ENCODE measurements at regions of chr16 and their contacts with region 1.

Region 1: DNA sequence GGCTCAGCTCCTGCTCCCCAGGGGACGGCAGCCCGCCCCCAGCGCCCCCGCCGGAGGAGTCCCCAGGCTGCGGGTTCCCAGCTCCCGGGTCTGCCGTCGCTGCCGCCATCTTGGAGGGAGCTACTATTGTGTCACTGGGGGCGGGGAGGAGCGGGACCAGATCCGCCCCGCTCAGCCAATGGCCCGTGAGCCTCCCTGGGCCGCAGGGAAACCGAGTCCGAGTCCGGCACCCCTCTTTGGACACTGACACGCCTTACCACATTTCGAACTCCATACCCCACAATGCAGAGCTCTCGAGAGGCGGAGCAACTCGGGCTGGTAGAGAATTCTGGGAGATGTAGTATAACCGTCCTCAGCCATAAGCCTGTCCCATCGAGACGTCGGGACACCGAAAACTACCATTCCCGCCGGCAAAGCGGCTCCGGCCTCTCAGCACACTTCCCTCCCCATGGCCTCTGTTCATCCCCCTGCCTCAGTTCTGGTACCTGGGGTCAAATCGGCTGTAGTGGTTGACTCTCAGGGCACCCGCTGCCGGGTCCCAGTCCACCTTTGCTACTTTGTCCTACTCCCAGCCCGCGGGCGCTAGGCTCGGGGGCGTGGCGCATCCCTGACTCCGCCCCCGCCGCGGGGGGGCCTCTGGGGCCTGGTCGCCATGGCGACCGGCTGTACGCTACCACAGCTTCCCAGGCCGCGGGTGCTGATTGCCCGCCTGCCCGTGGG is at the starts of genes RANBP10 and TSNAXIP1:
- DNase-seq: peak; percentile 100
- H3K4me3 ChIP-seq: peak within 1 kb of the TSS; percentile 93
- H3K27ac ChIP-seq: peak within 1 kb of the TSS; percentile 35
- H3K4me1 ChIP-seq: peaks cover 7% of the 10 kb centered on the region
- H3K27me3 ChIP-seq: no peaks in the 10 kb centered on the region
- total RNA-seq, gene RANBP10: 2.4 and 3.3 TPM in 2 replicates
- total RNA-seq, gene TSNAXIP1: 0.65 and 2.4 TPM in 2 replicates

Region 2: GRCh38 chr16:67672739-67673662 is 133.6 kb before region 1 on chr16:
- in situ Hi-C with region 1: loop called (anchors 10 kb)
- DNase-seq: peak; percentile 87
- H3K4me3 ChIP-seq: no peak overlapping the region
- H3K27ac ChIP-seq: no peak overlapping the region
- H3K4me1 ChIP-seq: no peaks in the 10 kb centered on the region
- H3K27me3 ChIP-seq: no peaks in the 10 kb centered on the region